ENCODE measurements at regions of chr9 and their contacts with region 1.

Region 1: DNA sequence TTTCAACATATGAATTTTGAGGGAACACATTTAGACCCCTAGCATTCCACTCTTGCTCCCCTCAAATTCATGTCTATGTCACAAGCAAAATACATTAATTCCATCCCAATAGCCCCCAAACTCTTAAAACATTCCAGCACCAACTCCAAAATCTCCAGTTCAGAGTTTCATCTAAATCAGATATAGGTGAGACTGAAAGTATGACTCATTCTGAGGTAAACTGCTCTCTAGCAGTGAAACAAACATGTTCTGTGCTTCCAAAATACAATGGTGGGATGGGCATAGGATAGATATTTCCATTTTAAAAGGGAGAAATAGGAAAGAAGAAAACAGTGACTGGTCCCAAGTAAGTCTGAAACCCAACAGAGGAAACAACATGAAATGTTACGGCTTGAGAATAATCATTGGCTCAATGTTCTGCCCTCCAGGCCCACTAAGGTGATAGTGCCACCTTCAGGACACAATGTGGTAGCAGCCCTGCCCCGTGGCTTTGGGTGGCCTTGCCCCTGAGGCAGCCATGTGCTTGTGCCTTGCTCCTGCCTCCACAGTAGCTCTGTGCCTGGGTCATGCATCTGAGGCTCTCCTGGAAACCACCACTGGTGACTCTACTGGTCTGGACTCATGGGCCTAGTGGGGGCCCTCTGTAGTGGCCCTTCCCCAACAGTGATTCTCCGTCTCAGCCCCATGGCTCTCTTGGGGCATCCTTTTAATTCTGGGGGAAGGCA is 36.4 kb upstream of the IPPK start:
- DNase-seq: no peak
- H3K4me3 ChIP-seq: no peak overlapping the region
- H3K27me3 ChIP-seq: no peaks in the 10 kb centered on the region
- CTCF ChIP-seq: peak; percentile 29; the same call in 1 of the 2 replicates

Region 2: DNA sequence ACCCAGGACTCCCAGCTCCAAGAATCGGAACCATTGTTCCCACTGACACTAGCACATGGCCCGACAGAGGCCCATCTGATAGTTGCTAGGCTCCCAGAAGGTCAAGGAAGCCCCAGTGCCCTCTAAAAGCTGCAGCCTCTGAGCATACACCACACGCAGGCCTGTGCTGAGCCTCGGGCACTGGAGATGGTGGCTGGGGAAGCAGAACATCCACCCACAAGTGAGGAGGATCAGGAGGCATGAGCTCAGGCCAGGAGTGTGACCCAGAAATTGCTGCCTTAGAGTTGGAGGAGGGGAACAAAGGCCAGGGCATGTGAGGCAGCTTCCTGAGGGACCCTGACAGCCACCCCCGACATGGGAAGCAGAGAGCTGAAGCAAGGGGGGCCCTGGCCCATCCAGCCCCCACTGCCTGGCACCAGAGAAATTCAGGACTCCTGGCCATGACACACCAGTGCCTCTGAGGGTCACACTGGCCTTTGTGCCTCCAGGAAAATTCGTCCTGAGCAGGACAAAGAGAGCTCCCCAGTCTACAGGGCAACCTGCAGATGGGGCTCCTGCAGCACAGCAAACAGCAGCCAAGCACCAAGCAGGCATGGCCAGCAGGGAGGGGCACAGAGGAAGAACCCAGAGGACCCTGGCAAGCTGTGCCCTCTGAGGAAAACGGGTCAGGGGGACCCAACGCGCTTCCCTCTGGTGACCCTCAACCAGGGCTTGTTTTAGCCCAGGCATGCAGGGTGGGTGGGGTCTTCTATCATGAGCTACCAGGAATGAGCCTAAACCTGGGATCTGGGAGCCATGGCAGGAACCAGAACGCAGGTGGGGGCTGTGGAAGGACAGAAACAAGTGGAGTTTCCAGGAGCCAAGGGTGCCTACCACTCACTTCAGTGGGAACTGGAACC is 57.7 kb before region 1 on chr9:
- CTCF ChIA-PET with region 1: no interaction called
- POLR2A ChIA-PET with region 1: no interaction called
- DNase-seq: no peak
- H3K4me3 ChIP-seq: no peak overlapping the region
- H3K27me3 ChIP-seq: no peaks in the 10 kb centered on the region
- CTCF ChIP-seq: no peak

Region 3: GRCh38 chr9:92954049-92954861 is 247.9 kb after region 1 on chr9:
- CTCF ChIA-PET with region 1: no interaction called
- POLR2A ChIA-PET with region 1: interaction called, 10 read pairs
- DNase-seq: no peak
- H3K4me3 ChIP-seq: no peak overlapping the region
- H3K27me3 ChIP-seq: peaks cover 5% of the 10 kb centered on the region
- CTCF ChIP-seq: no peak

Measured in BJ (cell line).